Adrenal gland (tissue), 19 donors: ENCODE measurements at regions of chr17 and their contacts with region 1.

Region 1: GRCh38 chr17:80008383-80008840 is 27.3 kb downstream of the TBC1D16 start:
- DNase-seq: peak; percentile 74 to 88 (median 81)
- H3K4me3 ChIP-seq: no peak overlapping the region
- H3K27ac ChIP-seq: no peak overlapping the region
- H3K4me1 ChIP-seq: peaks cover 0 to 8% of the 10 kb centered on the region in 2 donors
- H3K27me3 ChIP-seq: no peaks in the 10 kb centered on the region
- CTCF ChIP-seq: peak; percentile 86 to 95 (median 90)
- POLR2A ChIP-seq: no peak

Region 2: DNA sequence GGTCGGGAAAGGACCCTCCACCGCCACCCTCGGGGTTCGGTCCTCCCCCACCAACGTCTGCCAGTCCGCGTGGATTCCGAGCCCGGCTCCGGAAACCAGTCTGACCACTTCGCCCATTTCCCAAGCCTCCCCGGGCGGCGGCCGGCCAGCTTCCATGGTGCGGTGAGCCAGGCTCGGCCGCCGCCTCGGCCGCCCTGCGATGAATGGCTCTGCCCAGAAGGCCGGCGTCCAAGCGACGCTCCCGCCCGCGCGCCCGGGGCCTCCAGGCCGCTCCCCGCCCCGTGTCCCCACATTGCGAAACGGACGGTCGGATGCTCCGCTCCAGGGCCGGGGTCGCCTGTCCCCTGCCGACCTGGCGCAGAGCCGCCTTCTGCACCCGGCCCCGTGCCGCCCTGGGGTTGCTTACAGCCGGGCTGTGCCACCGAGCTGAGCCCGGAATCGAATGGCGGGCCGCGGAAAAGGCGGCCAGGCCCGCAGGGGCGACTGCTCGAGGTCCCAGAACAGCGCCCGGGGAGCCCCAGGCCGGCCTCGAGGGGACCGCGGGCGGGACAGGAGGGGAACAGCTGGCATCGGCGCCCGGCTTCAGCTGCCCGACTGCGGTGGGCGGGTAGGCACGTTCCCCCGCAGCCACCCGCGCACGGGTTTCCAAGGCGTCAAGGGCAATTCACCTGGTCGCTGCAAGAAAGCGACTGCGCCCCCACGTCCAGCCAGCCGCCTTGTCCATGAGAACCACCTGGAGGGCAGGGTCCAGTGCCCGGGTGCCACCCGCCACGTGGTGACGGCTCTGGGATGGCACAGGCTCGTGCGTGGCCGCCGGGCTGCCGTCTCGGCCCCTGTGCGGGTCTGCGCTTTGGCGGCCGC is 193.2 kb before region 1 on chr17:
- intact Hi-C with region 1: no loop called
- DNase-seq: peak in 3 of 7 donors; percentile 35 to 63 (median 43)
- H3K4me3 ChIP-seq: peak overlapping the region in 1 of 4 donors; percentile 33
- H3K27ac ChIP-seq: no peak overlapping the region
- H3K4me1 ChIP-seq: peaks cover 10 to 31% of the 10 kb centered on the region in 2 donors
- H3K27me3 ChIP-seq: peaks cover 59% of the 10 kb centered on the region
- CTCF ChIP-seq: peak in 1 of 6 experiments; percentile 6
- POLR2A ChIP-seq: no peak

Region 3: DNA sequence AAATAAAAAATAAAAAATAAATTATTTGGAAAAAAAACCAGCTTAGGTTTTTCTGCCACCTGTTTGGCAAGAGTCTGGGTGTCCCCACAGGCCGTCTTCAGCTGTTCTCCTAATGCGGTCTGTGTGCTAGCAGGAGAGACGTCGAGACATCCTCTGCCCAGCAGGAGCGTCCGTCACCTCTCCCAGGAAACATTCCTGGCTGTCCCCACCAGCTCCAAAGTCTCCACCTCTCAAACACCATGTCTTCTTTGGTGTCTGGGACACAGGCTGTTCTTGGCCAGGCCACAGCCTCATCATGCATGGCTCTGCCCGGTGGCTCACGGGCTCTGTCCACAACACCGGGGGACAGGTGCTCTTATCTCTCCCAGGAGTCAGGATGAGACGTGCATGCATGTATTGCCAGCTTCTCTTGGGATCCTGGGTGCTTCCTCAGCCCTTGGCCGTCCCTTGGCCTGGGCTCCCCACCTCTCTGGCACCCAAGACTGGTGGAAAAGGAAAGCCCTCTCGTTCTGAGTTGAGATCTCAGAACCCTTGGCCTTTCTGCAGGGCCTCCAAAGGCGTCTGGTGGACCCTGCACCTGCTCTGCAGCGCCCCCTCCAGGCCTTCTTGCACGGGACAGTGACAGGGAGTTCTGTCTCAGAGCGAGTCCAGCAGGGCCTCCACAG is 84.3 kb before region 1 on chr17:
- intact Hi-C with region 1: no loop called
- DNase-seq: peak in 2 of 7 donors; percentile 43 to 59
- H3K4me3 ChIP-seq: no peak overlapping the region
- H3K27ac ChIP-seq: no peak overlapping the region
- H3K4me1 ChIP-seq: peaks cover 6 to 14% of the 10 kb centered on the region in 2 donors
- H3K27me3 ChIP-seq: peaks cover 8% of the 10 kb centered on the region
- CTCF ChIP-seq: peak in 2 of 6 experiments; percentile 26 to 31
- POLR2A ChIP-seq: no peak

Region 4: GRCh38 chr17:80082403-80083135 is 74.2 kb after region 1 on chr17:
- intact Hi-C with region 1: loop called in 1 of 2 experiments (anchors 5 kb)
- DNase-seq: peak; percentile 67 to 85 (median 75)
- H3K4me3 ChIP-seq: peak overlapping the region in 1 of 4 donors; percentile 37
- H3K27ac ChIP-seq: no peak overlapping the region
- H3K4me1 ChIP-seq: peaks cover 0 to 3% of the 10 kb centered on the region in 2 donors
- H3K27me3 ChIP-seq: no peaks in the 10 kb centered on the region
- CTCF ChIP-seq: peak; percentile 47 to 79 (median 68)
- POLR2A ChIP-seq: no peak

Region 5: DNA sequence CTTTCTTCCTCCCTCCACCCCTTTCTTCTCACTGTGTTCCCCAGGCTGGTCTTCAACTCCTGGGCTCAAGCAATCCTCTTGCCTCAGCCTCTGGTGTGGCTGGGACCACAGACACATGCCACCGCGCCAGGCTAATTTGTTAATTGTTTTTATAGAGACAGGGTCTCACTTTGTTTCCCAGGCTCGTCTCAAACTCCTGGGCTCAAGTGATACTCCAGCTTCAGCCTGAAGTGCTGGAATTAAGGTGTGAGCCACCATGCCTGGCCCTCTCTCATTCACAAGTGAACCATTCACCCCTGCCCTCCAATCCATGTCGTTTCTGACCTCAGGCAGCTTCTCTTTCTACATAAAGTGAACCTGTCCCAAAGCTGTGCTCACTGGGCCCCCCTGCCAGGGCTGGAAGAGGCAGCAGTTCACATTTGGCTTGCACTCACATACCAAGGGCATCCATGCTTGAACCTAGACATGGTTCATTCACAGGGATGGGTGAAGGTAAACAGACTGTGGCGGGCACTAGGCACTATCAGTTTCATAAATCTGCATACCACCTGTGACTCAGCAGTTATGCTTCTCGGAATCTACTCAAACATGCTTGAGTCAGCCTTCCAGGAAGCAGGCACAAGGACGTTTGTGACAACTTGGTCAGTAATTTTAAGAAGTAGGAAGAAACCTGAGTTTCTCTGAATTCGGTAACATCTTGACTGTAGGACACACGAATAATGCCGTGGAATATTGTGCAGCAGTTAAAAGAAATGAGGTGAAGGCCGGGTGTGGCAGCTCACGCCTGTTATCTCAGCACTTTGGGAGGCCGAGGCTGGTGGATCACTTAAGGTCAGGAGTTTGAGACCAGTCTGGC is 246.2 kb after region 1 on chr17:
- intact Hi-C with region 1: no loop called
- DNase-seq: peak; percentile 66 to 92 (median 86)
- H3K4me3 ChIP-seq: no peak overlapping the region
- H3K27ac ChIP-seq: peak overlapping the region; percentile 85 to 95 (median 90)
- H3K4me1 ChIP-seq: peaks cover 14 to 28% of the 10 kb centered on the region in 2 donors
- H3K27me3 ChIP-seq: no peaks in the 10 kb centered on the region
- CTCF ChIP-seq: no peak
- POLR2A ChIP-seq: peak in 1 of 2 donors; percentile 63